CD8-positive, alpha-beta T cell (primary cell): ENCODE measurements at regions of chr3 and their contacts with region 1.

Region 1: GRCh38 chr3:138935848-138936740 is 10.8 kb downstream of the FOXL2 start:
- DNase-seq: peak; percentile 41 to 80 (median 72)
- ATAC-seq: peak; percentile 89
- H3K4me3 ChIP-seq: peak overlapping the region; percentile 33 to 50
- H3K4me3 Mint-ChIP-seq: peak overlapping the region; percentile 75
- H3K27ac ChIP-seq: no peak overlapping the region
- H3K27ac Mint-ChIP-seq: no peak overlapping the region
- H3K4me1 ChIP-seq: peaks cover 46% of the 10 kb centered on the region
- H3K4me1 Mint-ChIP-seq: peaks cover 29% of the 10 kb centered on the region
- H3K27me3 ChIP-seq: peaks cover 24 to 44% of the 10 kb centered on the region in 2 experiments
- H3K27me3 Mint-ChIP-seq: peaks cover 64% of the 10 kb centered on the region
- CTCF ChIP-seq: peak; percentile 90

Region 2: DNA sequence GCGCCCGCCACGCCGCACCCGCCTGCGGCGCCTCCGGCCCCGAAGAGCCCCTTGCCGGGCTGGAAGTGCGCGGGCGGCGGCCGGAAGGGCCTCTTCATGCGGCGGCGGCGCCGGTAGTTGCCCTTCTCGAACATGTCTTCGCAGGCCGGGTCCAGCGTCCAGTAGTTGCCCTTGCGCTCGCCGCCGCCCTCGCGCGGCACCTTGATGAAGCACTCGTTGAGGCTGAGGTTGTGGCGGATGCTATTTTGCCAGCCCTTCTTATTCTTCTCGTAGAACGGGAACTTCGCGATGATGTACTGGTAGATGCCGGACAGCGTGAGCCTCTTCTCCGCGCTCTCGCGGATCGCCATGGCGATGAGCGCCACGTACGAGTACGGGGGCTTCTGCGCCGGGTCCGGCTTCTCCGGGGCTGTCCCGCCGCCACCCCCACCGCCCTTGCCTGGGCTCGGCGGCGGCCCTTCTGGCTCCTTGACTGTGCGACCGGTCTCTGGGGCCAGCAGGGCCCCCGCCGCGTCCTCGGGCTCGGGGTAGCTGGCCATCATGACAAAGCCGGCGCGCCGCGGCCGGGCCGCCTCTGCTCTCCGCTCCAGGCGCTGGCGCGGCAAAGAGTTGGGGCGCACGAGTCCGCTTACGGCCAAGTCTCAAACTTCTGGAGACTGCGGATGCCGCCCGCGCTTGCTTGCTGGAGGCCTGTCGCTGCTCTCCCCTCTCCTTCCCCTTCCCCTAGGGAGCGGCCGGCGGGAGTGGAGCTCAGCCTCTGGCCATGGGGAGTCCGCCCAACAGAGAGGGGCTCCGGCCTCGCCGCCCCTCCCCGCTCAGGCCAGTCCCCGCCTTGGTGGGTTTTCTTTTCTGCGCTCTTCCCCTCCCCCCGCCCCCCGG is 10.3 kb after region 1 on chr3:
- CTCF ChIA-PET with region 1: interaction called, 25 read pairs
- POLR2A ChIA-PET with region 1: no interaction called
- intact Hi-C with region 1: no loop called
- DNase-seq: peak in 2 of 9 experiments; percentile 38 to 43
- ATAC-seq: no peak
- H3K4me3 ChIP-seq: peak overlapping the region; percentile 22 to 37
- H3K4me3 Mint-ChIP-seq: peak overlapping the region; percentile 77
- H3K27ac ChIP-seq: no peak overlapping the region
- H3K27ac Mint-ChIP-seq: no peak overlapping the region
- H3K4me1 ChIP-seq: peaks cover 38% of the 10 kb centered on the region
- H3K4me1 Mint-ChIP-seq: peaks cover 45% of the 10 kb centered on the region
- H3K27me3 ChIP-seq: peaks cover 54 to 62% of the 10 kb centered on the region in 2 experiments
- H3K27me3 Mint-ChIP-seq: peaks cover 74% of the 10 kb centered on the region
- CTCF ChIP-seq: no peak